ENCODE measurements at regions of chr5 and their contacts with region 1.

Region 1: DNA sequence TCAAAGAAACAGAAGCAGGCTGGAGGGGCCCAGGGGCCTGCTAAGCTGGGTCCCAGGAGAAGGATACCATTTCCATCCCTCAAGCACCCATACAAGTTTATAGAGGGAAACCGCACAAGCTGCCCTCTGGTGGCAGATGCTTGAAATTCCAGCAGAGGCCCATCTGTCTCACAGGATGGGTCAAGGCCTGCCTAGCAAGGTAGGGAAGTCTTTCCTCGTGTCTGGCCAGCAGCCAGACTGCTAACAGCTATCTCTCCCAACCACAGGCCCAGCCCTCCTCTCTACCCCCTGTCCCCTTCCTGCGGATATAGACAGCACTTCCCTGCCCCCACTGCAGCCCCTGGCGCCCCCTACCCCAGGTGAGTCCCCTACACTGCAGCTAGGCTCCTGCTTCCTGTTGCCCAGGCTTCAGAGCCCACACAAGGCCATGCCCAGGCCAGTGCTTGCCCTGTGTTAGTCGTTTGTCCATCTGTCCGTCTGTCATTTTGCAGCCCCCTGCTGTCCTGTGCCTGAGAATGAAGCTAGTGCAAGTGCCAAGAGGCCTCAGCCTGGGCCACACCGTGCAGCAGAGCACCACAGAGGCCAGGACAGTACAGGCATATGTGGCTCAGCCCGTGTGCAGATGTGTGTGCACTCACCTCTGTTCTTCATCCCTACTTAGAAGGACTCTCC is 26.2 kb downstream of the TCF7 start:
- DNase-seq: peak; percentile 80
- ATAC-seq: peak; percentile 83
- H3K4me3 Mint-ChIP-seq: no peak overlapping the region
- H3K27ac Mint-ChIP-seq: peak overlapping the region; percentile 86; the same call in 1 of the 2 replicates
- H3K4me1 Mint-ChIP-seq: peaks cover 14% of the 10 kb centered on the region
- H3K27me3 Mint-ChIP-seq: no peaks in the 10 kb centered on the region
- CTCF ChIP-seq: peak; percentile 72

Region 2: DNA sequence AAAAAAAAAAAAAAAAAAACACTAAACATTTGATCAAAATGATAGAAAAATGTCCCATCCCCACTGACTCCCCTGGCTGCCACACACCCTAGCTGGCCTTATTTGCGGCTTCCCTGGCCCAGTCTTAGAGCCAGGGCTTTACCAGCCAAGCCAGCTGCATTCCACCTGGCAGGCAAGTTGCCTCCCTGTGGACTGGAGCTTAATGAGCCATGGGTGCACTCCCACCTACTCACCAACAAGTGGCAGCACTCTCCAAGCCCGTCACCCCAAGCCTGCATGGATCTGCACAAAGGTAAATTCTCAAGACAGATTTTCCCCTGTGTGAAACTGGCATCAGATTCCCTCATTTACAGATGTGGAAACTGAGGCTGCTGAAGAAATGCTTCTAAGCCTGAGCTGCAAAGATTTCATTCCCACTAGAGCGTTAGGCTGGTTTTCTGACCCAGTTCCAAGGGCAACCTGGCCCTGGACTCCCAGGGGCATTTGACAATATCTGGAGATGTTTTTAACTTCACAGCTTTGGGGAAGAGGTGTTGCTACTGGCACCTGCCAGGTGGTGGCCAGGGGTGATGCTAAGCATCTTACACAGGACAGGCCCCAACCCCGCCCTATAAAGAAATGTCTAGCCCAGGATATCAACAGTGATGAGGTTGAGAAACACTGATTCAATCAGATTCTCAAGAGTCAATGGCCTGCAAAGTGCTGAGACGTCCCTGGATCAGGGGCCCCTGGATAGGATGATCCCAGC is 114.0 kb before region 1 on chr5:
- CTCF ChIA-PET with region 1: interaction called, 63 read pairs
- POLR2A ChIA-PET with region 1: no interaction called
- DNase-seq: peak; percentile 74
- ATAC-seq: peak; percentile 99
- H3K4me3 Mint-ChIP-seq: no peak overlapping the region
- H3K27ac Mint-ChIP-seq: no peak overlapping the region; the same call in 1 of the 2 replicates
- H3K4me1 Mint-ChIP-seq: 0 out of 2 replicates have a peak, but pooled peaks cover 9% of the 10 kb centered on the region
- H3K27me3 Mint-ChIP-seq: peaks cover 4% of the 10 kb centered on the region; the same call in 1 of the 2 replicates
- CTCF ChIP-seq: peak; percentile 41; the same call in 1 of the 2 replicates

Region 3: GRCh38 chr5:134053840-134054338 is 86.8 kb before region 1 on chr5:
- CTCF ChIA-PET with region 1: interaction called, 25 read pairs
- POLR2A ChIA-PET with region 1: no interaction called
- DNase-seq: no peak
- ATAC-seq: peak; percentile 28; the same call in 1 of the 2 replicates
- H3K4me3 Mint-ChIP-seq: no peak overlapping the region
- H3K27ac Mint-ChIP-seq: peak overlapping the region; percentile 32
- H3K4me1 Mint-ChIP-seq: peaks cover 46% of the 10 kb centered on the region
- H3K27me3 Mint-ChIP-seq: peaks cover 14% of the 10 kb centered on the region
- CTCF ChIP-seq: no peak

Region 4: DNA sequence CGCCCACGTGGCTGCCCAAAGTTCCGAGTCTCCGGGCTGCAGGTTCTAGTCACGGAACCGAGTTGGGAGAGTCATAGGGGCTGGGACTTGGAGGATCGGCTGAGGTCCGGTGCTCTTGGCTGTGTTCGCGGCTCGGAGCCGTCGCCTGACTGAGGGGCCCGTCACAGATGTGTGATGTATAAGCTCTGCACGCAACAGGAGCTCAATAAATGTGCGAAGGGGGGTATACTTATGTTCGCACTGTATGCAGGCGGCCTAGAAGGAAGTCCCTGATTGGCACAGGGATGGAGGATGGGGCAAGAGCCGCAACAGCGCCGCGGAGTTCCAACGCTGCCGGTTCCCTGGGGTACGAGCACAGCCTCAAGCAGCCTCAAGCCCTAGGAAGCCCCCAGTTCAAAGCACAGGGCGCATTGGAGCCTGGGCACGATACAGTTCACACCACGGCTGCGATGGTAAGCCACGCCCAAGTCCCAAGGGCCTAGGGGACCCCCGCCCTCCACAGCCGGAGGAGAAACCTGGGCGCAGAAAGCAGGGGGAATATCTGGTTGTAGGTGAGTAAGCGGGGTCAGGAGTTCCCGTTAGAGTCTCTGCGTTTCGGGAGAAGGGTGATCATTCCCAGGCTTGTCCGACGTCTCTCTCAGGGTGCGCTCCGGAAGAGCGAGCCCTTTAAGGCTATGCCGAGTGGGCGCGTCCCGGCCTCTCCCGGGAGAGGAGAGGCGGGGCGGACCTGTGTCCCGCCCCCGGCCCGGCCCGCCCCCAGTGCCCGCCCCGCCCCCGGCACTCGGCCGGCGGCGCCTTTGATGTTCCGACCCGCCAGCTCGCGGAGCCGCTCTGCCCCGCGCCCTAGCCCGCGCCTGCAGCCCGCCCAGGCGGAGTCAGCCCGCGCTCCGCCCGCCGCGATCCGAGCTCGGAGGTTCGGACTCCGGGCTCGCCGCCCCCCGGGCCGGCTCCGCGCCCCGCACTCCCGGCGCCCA is 26.5 kb before region 1 on chr5 and contains the start of gene TCF7:
- CTCF ChIA-PET with region 1: interaction called, 22 read pairs
- POLR2A ChIA-PET with region 1: interaction called, 5 read pairs
- DNase-seq: peak; percentile 75
- ATAC-seq: peak; percentile 84
- H3K4me3 Mint-ChIP-seq: peak within 1 kb of the TSS; percentile 79
- H3K27ac Mint-ChIP-seq: peak within 1 kb of the TSS; percentile 80; the same call in 1 of the 2 replicates
- H3K4me1 Mint-ChIP-seq: peaks cover 11% of the 10 kb centered on the region
- H3K27me3 Mint-ChIP-seq: peaks cover 40% of the 10 kb centered on the region
- CTCF ChIP-seq: no peak
- total RNA-seq, gene TCF7: 8.9 to 11.3 TPM (median 9.6 TPM) in 3 replicates

Region 5: GRCh38 chr5:134153657-134154056 is 13.0 kb after region 1 on chr5:
- CTCF ChIA-PET with region 1: interaction called, 16 read pairs
- POLR2A ChIA-PET with region 1: interaction called, 3 read pairs
- DNase-seq: no peak
- ATAC-seq: no peak
- H3K4me3 Mint-ChIP-seq: no peak overlapping the region
- H3K27ac Mint-ChIP-seq: no peak overlapping the region
- H3K4me1 Mint-ChIP-seq: no peaks in the 10 kb centered on the region
- H3K27me3 Mint-ChIP-seq: no peaks in the 10 kb centered on the region
- CTCF ChIP-seq: no peak

Region 6: GRCh38 chr5:134328619-134329018 is 188.0 kb after region 1 on chr5:
- CTCF ChIA-PET with region 1: no interaction called
- POLR2A ChIA-PET with region 1: no interaction called
- DNase-seq: no peak
- ATAC-seq: no peak
- H3K4me3 Mint-ChIP-seq: no peak overlapping the region
- H3K27ac Mint-ChIP-seq: no peak overlapping the region
- H3K4me1 Mint-ChIP-seq: no peaks in the 10 kb centered on the region
- H3K27me3 Mint-ChIP-seq: peaks cover 39% of the 10 kb centered on the region
- CTCF ChIP-seq: no peak

Measured in WTC11 (cell line).